Kidney (tissue), 22 donors: ENCODE measurements at regions of chr9 and their contacts with region 1.

Region 1: GRCh38 chr9:32431940-32432555 is 47.6 kb downstream of the ACO1 start:
- DNase-seq: peak in 2 of 5 donors; percentile 18 to 44
- H3K4me3 ChIP-seq: no peak overlapping the region
- H3K27ac ChIP-seq: no peak overlapping the region
- H3K4me1 ChIP-seq: peaks cover 0 to 4% (median 3%) of the 10 kb centered on the region in 3 donors
- H3K27me3 ChIP-seq: no peaks in the 10 kb centered on the region
- CTCF ChIP-seq: peak; percentile 49

Region 2: DNA sequence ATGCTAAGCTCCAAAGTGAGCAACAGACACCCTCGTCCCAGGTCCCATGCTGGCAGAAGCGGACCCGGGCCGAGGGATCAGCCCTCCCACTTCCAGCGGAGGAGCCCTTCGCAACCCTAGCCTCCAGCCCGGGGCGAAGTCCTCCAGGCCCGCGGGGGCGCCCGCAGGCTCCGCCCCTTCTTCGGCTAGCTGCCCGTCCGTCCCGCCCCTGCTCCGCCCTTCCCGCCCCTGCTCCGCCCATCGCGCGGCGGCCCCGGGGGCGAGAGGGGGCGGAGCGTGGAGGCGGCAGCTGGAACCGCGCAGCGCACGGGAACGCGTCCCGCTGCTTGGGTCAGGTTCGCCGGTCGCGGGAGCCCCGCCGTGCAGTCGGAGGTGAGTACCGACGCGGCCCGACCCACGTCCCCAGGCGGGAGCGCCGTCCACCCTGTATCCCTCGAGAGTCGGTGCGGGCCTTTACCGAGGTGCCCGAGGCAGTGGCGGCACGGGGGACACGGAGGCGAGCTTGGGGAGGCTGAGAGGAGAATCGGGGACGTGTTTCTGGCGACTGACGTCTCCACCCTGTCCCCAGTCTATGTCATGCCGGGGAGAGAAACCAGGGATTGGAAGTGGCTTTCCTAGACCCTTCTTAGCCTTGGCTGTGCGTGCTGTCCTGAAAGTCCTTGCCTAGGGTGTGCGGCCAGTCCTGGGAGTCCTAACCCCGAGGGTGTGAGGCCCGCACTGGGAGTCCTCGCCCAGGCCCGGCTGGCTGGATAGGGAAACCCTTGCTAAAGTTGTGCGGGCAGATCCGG is 47.5 kb before region 1 on chr9 and contains the start of gene ACO1:
- intact Hi-C with region 1: loop called (anchors 10 kb)
- DNase-seq: peak; percentile 86 to 96 (median 93)
- H3K4me3 ChIP-seq: peak within 1 kb of the TSS; percentile 91 to 97 (median 94)
- H3K27ac ChIP-seq: peak within 1 kb of the TSS; percentile 90 to 94
- H3K4me1 ChIP-seq: peaks cover 0 to 14% (median 6%) of the 10 kb centered on the region in 3 donors
- H3K27me3 ChIP-seq: peaks cover 9% of the 10 kb centered on the region
- CTCF ChIP-seq: no peak
- total RNA-seq, gene ACO1: 36.8 TPM

Region 3: DNA sequence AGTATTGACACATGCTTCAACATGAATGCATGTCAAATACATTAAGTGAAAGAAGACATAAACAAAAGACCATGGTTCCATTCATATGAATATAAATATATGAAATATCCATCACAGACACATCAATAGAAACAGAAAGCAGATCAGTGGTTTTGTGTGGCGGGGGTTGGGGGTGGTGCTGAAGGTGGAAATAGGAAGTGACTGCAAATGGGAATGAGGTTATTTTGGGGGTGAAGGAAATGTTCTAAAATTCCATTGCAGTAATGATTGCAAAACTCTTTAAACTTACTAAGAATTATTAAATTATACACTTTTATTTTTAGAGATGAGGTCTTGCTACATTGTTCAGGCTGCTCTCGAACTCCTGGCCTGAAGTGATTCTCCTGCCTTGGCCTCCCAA is 174.8 kb after region 1 on chr9:
- intact Hi-C with region 1: no loop called
- DNase-seq: no peak
- H3K4me3 ChIP-seq: no peak overlapping the region
- H3K27ac ChIP-seq: no peak overlapping the region
- H3K4me1 ChIP-seq: no peaks in the 10 kb centered on the region
- H3K27me3 ChIP-seq: no peaks in the 10 kb centered on the region
- CTCF ChIP-seq: no peak

Region 4: GRCh38 chr9:32832336-32832735 is 400.3 kb after region 1 on chr9:
- intact Hi-C with region 1: no loop called
- DNase-seq: no peak
- H3K4me3 ChIP-seq: no peak overlapping the region
- H3K27ac ChIP-seq: no peak overlapping the region
- H3K4me1 ChIP-seq: no peaks in the 10 kb centered on the region
- H3K27me3 ChIP-seq: no peaks in the 10 kb centered on the region
- CTCF ChIP-seq: no peak

Region 5: DNA sequence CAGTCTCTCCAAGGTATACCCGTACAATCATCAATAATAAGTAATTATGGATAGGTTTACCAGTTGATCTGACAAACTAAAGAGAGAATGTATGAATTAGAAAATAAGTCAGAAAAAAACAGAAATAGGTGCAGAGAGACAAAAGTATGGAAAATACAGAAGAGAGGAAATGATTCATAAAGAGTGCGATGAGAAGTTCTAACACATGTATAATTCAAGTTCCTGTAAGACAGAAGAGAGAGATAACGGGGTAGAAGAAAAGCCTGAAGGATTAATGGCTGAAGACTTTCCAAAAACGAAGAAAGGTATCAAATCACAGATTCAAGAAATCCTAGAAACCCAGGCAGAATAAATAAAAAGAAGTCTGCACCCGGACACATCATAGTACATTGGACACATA is 660.6 kb after region 1 on chr9:
- intact Hi-C with region 1: no loop called
- DNase-seq: no peak
- H3K4me3 ChIP-seq: no peak overlapping the region
- H3K27ac ChIP-seq: no peak overlapping the region
- H3K4me1 ChIP-seq: no peaks in the 10 kb centered on the region
- H3K27me3 ChIP-seq: no peaks in the 10 kb centered on the region
- CTCF ChIP-seq: no peak